ENCODE measurements at regions of chr2 and their contacts with region 1.

Region 1: GRCh38 chr2:39728941-39729351 is 50.1 kb downstream of the THUMPD2 start:
- DNase-seq: peak; percentile 63
- H3K4me3 Mint-ChIP-seq: no peak overlapping the region
- H3K27ac Mint-ChIP-seq: no peak overlapping the region
- H3K4me1 Mint-ChIP-seq: peaks cover 2% of the 10 kb centered on the region
- H3K27me3 Mint-ChIP-seq: no peaks in the 10 kb centered on the region

Region 2: DNA sequence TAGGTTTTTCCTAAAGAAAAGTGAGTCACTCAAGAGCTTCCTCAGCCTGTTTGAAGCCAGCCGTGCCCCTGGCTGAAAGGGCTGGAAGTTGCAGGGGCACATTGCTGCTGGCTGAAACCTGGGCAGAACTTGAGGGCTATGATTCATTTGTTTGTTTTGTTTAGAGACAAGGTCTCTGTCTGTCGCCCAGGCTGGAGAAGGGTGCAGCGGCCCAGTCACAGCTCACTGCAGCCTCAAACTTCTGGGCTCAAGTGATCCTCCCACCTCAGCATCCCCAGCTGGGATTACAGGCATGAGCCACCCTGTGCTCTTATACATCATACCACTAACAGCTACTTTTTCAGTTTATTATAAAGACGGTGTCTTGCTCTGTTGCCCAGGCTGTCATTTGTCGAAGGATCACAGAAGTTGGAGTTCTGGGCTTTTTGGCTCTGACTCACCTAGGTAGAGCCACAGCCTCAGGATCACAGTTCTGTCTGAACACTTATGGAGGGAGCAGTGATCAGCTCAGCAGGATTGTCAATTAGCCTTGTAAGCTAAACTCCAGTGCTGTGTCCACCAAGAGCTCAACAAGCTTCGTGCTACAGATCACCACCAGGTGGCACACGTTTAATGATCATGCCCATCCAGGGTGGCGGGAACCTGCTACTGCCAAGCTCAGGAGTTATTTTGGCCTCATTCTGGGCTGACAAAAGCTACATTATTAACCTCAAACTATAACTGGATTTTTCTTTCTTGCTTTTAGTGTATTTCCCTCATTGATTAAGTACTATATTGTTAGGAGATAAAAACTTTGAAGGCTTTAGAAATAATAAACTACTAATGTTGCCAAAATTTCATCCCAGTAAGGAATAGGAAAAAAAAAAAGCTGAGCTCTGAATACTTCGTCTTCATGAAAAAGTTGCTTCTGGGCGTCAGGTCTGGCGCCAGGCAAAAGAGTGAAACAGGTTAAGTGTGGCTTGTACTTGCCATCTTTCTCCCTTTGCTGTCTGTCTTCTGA is 781.4 kb before region 1 on chr2:
- CTCF ChIA-PET with region 1: no interaction called
- intact Hi-C with region 1: loop called (anchors 10 kb)
- DNase-seq: peak; percentile 85
- H3K4me3 Mint-ChIP-seq: no peak overlapping the region
- H3K27ac Mint-ChIP-seq: no peak overlapping the region
- H3K4me1 Mint-ChIP-seq: no peaks in the 10 kb centered on the region
- H3K27me3 Mint-ChIP-seq: no peaks in the 10 kb centered on the region

Region 3: DNA sequence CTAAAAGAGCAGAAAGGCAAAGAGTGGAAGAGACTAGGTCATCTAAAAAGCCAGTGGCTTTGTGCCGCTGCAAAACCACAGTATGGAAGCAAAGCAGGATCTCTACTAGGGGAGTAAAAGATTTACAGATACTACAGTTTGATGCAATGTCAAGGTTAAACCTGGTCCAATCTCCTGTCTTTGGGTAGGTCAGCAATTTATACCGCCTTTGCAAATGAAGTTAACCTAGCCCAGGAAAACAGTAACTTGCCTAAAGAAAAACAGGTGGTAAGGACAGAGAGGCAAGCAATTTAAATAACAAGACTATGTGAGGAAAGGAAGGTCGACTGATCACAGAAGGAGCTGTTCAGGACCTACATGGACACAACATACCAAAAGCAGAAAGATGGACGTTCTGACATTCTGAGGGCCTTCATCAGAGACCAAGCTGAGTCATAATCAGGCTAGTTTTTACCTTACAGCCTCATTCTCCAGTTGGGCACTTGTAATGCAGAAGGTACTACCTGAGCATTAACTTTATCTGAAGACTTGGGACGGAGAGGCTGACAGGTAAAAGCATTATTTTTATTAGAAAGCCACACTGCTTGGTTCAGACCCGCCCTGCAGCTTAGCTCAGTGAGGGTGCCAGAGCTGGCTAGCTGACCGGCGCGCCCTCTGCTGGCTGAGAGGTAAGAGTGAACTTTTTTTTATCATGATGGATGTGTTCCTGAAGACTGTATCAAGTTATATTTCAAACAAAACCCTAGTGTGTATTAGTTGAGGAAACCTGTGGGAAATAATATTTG is 501.1 kb before region 1 on chr2:
- CTCF ChIA-PET with region 1: no interaction called
- intact Hi-C with region 1: loop called (anchors 1 kb)
- DNase-seq: peak; percentile 89
- H3K4me3 Mint-ChIP-seq: peak overlapping the region; percentile 66
- H3K27ac Mint-ChIP-seq: no peak overlapping the region
- H3K4me1 Mint-ChIP-seq: peaks cover 15% of the 10 kb centered on the region
- H3K27me3 Mint-ChIP-seq: no peaks in the 10 kb centered on the region

Region 4: DNA sequence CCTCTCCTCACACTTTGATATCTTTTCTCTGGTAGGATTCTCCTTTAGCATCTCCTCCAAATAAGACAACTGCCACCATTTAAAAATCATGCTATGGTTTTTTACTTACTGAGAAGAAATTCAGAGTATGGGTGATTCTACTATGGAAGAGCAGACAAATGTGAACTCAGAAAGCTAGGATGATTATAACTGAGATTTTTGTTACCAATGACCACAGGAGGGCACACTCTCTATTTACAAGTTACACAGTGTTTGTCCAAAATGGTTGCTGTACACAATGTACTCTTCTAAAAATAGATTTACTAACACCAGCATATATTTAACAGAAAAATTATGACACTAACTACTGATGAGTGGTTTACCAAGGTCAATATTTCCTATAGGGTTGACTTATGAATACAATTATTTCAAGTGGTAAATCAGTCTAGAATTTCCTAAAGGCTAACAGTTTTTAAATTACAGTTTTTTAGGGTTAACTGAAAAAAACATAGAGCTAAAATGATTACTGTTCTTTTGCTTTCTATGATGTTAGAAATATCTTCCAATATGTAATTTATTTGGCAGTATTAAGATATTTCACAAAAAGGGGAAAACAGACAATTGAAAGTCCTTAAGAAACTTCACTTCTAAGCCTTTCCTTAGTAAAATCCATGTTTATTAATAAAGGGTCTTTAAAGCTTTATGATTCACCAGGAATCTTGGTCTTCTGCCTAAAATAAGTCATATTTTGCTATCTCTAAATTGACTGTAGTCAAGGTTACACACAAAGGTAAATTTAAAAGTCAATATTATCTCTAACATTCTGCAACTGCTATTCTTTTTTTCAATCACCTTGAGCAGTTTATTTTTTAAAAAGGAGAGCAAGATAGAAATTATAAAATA is 349.1 kb before region 1 on chr2:
- CTCF ChIA-PET with region 1: interaction called, 8 read pairs
- intact Hi-C with region 1: loop called (anchors 1 kb)
- DNase-seq: no peak
- H3K4me3 Mint-ChIP-seq: no peak overlapping the region
- H3K27ac Mint-ChIP-seq: no peak overlapping the region
- H3K4me1 Mint-ChIP-seq: peaks cover 19% of the 10 kb centered on the region
- H3K27me3 Mint-ChIP-seq: no peaks in the 10 kb centered on the region

Region 5: GRCh38 chr2:39411181-39411944 is 317.6 kb before region 1 on chr2:
- CTCF ChIA-PET with region 1: no interaction called
- intact Hi-C with region 1: no loop called
- DNase-seq: no peak
- H3K4me3 Mint-ChIP-seq: no peak overlapping the region
- H3K27ac Mint-ChIP-seq: no peak overlapping the region
- H3K4me1 Mint-ChIP-seq: peaks cover 65% of the 10 kb centered on the region
- H3K27me3 Mint-ChIP-seq: no peaks in the 10 kb centered on the region

Region 6: GRCh38 chr2:39738936-39739785 is 10.2 kb after region 1 on chr2:
- CTCF ChIA-PET with region 1: interaction called, 11 read pairs
- intact Hi-C with region 1: no loop called
- DNase-seq: no peak
- H3K4me3 Mint-ChIP-seq: no peak overlapping the region
- H3K27ac Mint-ChIP-seq: no peak overlapping the region
- H3K4me1 Mint-ChIP-seq: peaks cover 2% of the 10 kb centered on the region
- H3K27me3 Mint-ChIP-seq: no peaks in the 10 kb centered on the region

Measured in activated naive CD4-positive, alpha-beta T cell treated with anti-CD3 and anti-CD28 coated beads for 36 hours (primary cell).